ENCODE measurements at regions of chr7 and their contacts with region 1.

Region 1: DNA sequence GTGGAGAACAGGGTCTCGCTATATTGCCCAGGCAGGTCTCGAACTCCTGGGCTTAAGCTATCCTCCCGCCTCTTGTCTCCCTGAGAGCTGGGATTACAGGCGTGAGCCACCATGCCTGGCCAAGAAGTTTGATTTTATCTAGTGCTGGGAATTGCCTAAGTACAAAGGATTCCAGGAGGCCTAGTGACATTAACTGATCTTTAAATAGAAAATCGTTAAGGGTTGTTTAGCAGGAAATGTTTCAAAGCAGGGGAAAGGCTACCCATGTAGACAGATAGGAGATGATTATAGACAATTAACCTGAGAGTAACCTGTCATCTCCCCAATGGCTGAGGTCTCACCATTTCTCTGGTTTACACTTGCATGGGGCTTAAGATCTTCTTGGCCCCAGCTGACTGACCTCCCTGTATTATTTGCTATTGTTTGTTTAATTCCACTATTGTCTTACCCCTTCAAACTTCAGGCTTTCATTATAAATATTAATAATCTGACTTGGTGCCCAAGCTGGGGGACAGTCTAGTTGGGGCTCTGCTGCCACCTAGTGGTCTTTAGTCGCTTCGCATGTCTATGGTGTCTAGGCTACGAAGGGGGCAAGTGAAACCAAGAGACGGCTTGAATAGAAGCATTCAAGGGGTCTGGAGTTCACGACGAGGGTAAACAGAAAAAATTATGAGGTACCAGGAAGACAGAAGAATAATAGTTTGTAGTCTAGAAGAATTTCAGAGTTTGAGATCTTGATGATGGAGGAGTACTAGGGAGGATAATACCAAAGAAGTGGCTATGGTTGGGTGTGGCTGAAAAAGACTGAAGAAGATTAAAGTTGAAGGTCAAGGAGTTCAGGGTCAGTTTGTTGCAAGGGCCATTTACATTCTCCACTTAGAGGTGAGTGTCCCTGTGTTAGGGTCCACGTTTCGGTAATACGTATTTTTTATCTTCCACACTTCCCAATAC is 40.4 kb upstream of the BPGM start:
- DNase-seq: peak; percentile 47 to 59
- H3K4me3 ChIP-seq: no peak overlapping the region
- H3K4me3 Mint-ChIP-seq: no peak overlapping the region
- H3K27ac Mint-ChIP-seq: no peak overlapping the region
- H3K4me1 ChIP-seq: peaks cover 7% of the 10 kb centered on the region; the same call in 1 of the 2 replicates
- H3K4me1 Mint-ChIP-seq: peaks cover 7% of the 10 kb centered on the region
- H3K27me3 ChIP-seq: peaks cover under 1% of the 10 kb centered on the region
- H3K27me3 Mint-ChIP-seq: peaks cover 7% of the 10 kb centered on the region
- CTCF ChIP-seq: peak; percentile 90 to 91

Region 2: DNA sequence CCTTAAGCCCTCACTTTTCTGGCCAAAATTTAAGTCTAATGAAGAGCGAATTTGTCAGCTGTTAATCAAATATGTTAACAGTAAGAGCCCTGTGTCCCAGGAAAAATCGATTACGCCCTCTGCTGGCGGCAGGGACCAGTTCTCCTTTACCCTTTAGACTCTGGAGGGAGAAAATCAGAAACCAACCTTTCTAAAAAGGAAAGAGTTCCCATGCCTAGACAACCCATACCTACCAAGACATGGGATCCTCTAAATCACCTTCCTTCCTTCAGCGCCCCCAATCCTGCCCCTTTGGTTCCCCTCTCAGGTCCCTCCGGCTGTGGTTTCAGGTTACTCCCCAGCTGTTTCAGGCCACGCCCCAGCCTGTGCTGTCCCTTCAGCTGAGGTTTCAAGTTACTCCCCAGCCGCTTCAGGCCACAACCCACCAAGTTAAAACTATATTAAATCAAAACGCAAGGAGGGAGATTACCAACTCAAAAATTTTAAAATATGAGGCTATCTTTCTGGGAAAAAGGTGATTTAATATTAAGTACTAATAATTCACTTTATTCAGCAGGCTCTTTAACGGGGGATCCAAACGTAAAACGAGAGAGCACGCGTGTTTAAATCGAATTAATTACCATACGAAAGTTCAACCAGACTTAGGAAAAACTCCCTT is 58.7 kb before region 1 on chr7:
- CTCF ChIA-PET with region 1: no interaction called
- POLR2A ChIA-PET with region 1: no interaction called
- intact Hi-C with region 1: loop called (anchors 1 kb)
- DNase-seq: peak; percentile 60 to 68
- H3K4me3 ChIP-seq: 0 out of 2 replicates have a peak overlapping the region, but pooled peaks have one; percentile 4
- H3K4me3 Mint-ChIP-seq: peak overlapping the region; percentile 55
- H3K27ac Mint-ChIP-seq: no peak overlapping the region
- H3K4me1 ChIP-seq: no peaks in the 10 kb centered on the region
- H3K4me1 Mint-ChIP-seq: no peaks in the 10 kb centered on the region
- H3K27me3 ChIP-seq: no peaks in the 10 kb centered on the region
- H3K27me3 Mint-ChIP-seq: peaks cover 22% of the 10 kb centered on the region
- CTCF ChIP-seq: peak; percentile 77 to 84